ENCODE measurements at regions of chr2 and their contacts with region 1.

Region 1: DNA sequence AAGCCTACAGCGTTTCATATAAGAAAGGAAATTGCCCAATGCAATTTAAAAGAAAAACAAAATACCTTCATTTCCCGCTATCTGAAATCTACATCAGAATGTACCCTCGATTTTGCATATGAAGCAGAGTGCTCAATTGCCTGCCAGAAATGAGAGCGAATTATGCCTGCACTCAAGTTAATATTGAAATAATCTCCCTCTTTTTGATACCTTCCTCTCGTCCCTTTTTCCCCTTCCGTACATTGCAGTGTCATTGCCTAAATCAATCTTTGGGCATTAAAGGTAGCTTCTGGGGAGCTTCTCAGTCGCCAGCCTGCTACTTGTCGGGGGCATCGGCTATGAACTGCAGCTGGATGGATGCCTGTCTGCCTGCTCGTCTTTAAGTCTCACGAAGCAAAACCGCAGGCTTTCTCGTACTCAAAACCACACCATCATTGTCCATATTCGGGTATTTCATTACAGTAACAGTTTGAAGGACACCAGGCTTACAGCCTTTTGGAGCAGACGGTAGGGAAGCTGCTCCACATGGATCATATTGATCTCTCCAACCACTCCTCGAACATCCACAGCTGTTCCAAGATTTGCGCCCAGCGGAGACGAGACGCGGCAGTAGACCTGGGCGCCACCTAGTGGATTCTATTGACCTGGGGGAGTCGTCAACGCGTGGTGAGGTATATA is 64.0 kb upstream of the HNRNPA3 start:
- DNase-seq: peak; percentile 36
- H3K4me3 ChIP-seq: peak overlapping the region; percentile 43
- CTCF ChIP-seq: peak; percentile 95

Region 2: GRCh38 chr2:176110975-176111663 is 1037.5 kb before region 1 on chr2:
- in situ Hi-C with region 1: loop called (anchors 25 kb)
- DNase-seq: no peak
- H3K4me3 ChIP-seq: no peak overlapping the region
- CTCF ChIP-seq: peak; percentile 66

Region 3: GRCh38 chr2:176653479-176654443 is 494.9 kb before region 1 on chr2:
- in situ Hi-C with region 1: loop called (anchors 25 kb)
- DNase-seq: peak; percentile 26
- H3K4me3 ChIP-seq: no peak overlapping the region
- CTCF ChIP-seq: peak; percentile 85

Region 4: GRCh38 chr2:177187631-177188312 is 39.2 kb after region 1 on chr2:
- in situ Hi-C with region 1: no loop called
- DNase-seq: peak; percentile 57
- H3K4me3 ChIP-seq: no peak overlapping the region
- CTCF ChIP-seq: no peak

Measured in astrocyte of the cerebellum (primary cell).